ENCODE measurements at regions of chr10 and their contacts with region 1.

Region 1: DNA sequence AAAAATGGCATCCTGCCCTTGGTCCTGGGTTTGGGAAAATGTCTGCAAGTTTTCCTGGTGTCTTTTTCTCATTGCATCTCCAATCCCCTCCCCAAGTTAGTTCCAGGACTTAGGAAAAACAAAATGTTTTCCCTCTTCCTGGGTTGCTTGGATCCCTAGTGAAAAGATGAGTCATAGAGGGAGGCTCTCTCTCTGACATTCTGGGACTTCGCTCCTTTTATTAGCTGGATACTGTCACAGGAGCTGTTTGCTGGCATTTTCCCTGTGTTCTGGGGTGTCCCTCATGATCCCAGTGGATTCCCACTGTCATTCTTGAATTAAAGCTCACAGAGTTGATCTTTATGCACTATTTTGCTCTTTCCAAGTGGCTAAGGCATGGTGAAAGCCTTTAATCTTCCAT is 316.4 kb upstream of the MBL2 start:
- DNase-seq: no peak
- H3K4me3 ChIP-seq: no peak overlapping the region
- H3K4me3 Mint-ChIP-seq: no peak overlapping the region
- H3K27ac Mint-ChIP-seq: no peak overlapping the region
- H3K4me1 ChIP-seq: no peaks in the 10 kb centered on the region
- H3K4me1 Mint-ChIP-seq: peaks cover 9% of the 10 kb centered on the region
- H3K27me3 ChIP-seq: no peaks in the 10 kb centered on the region
- H3K27me3 Mint-ChIP-seq: no peaks in the 10 kb centered on the region
- CTCF ChIP-seq: no peak

Region 2: GRCh38 chr10:53108317-53108934 is 19.5 kb after region 1 on chr10:
- CTCF ChIA-PET with region 1: no interaction called
- POLR2A ChIA-PET with region 1: no interaction called
- intact Hi-C with region 1: loop called (anchors 1 kb)
- DNase-seq: no peak
- H3K4me3 ChIP-seq: no peak overlapping the region
- H3K4me3 Mint-ChIP-seq: no peak overlapping the region
- H3K27ac Mint-ChIP-seq: no peak overlapping the region
- H3K4me1 ChIP-seq: peaks cover 11% of the 10 kb centered on the region
- H3K4me1 Mint-ChIP-seq: peaks cover 15% of the 10 kb centered on the region
- H3K27me3 ChIP-seq: no peaks in the 10 kb centered on the region
- H3K27me3 Mint-ChIP-seq: no peaks in the 10 kb centered on the region
- CTCF ChIP-seq: no peak

Measured in Caco-2 (cell line).